Sigmoid colon (tissue), 7 donors: ENCODE measurements at regions of chr2 and their contacts with region 1.

Region 1: DNA sequence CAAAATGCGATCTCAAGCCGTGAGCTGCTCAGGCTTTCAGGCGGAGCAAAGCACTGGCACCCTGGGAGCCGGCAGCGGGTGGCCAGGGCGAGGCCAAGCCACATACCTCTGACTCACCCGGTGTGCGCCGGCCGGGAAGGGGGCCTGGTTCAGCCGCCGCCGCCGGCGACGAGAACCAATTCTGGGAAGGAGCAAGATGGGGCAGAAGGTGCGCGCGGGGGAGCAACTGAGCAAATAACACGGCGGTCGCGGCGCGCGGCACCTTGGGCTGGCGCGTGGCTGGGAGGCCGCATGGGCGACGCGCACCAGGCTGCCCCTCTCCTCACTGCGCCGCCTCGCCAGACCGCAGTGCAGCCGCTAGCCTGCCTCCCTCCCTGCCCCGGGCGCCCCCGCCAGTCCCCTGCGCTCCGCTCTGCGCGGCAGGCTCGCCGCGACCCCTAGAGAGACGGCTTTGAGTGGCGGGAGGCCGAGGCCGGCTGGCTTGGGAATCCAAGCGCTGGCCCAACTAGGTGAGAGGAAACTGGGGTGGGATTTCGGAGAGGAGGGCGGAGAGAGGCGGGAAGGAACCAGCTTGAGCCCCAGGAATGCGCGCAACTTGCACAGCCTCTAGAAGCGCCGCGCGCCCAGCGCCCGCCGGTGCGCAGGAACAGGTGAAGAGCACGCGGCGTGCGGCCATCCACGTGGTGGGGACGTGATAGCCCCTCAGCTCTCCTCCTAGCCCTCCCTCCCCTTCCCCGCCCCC is 3.2 kb downstream of the NRP2 start:
- DNase-seq: peak; percentile 79
- H3K4me3 ChIP-seq: peak overlapping the region; percentile 70 to 99 (median 90)
- H3K27ac ChIP-seq: peak overlapping the region; percentile 94 to 99 (median 96)
- H3K4me1 ChIP-seq: peaks cover 0 to 51% (median 47%) of the 10 kb centered on the region in 4 donors
- H3K27me3 ChIP-seq: no peaks in the 10 kb centered on the region
- CTCF ChIP-seq: no peak
- EP300 ChIP-seq: no peak
- POLR2A ChIP-seq: no peak

Region 2: GRCh38 chr2:205706769-205707381 is 21.4 kb after region 1 on chr2:
- intact Hi-C with region 1: loop called (anchors 2 kb)
- DNase-seq: peak; percentile 94
- H3K4me3 ChIP-seq: peak overlapping the region in 2 of 4 donors; percentile 0 to 7
- H3K27ac ChIP-seq: peak overlapping the region; percentile 94 to 99 (median 96)
- H3K4me1 ChIP-seq: peaks cover 0 to 100% (median 95%) of the 10 kb centered on the region in 4 donors
- H3K27me3 ChIP-seq: no peaks in the 10 kb centered on the region
- CTCF ChIP-seq: no peak
- EP300 ChIP-seq: peak in 1 of 4 donors; percentile 70
- POLR2A ChIP-seq: no peak

Region 3: DNA sequence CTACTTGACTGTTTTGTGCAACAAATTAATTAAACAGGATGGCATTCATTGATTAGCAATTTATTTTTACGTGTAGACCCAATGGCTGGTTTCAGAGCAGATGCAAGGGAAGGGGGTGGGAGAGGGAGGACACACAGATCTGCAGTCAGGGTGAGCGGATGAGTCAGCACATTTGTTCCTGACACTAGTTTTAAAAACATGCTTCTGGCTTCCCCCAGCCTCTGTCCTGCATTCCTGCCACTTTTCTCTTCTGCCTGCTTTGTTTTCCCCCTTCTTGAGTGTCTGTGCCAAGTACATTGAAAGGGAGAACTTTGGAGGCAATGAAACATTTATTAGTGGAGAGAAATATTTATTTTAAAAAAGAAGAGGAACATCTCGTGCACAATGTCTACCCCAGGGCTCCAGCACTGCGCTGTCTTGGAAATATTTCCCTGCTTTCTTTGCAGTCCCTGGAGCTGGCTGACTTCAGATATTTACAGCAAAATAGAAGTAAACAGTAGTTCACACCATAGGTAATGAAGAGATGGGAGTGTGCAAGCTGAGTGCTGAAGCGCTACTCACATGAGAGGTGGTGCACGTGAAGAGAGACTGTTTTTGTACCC is 49.1 kb after region 1 on chr2:
- intact Hi-C with region 1: loop called (anchors 5 kb)
- DNase-seq: peak; percentile 92
- H3K4me3 ChIP-seq: no peak overlapping the region
- H3K27ac ChIP-seq: peak overlapping the region; percentile 83 to 99 (median 94)
- H3K4me1 ChIP-seq: peaks cover 0 to 86% (median 76%) of the 10 kb centered on the region in 4 donors
- H3K27me3 ChIP-seq: no peaks in the 10 kb centered on the region
- CTCF ChIP-seq: no peak
- EP300 ChIP-seq: peak in 2 of 4 donors; percentile 81 to 83
- POLR2A ChIP-seq: no peak

Region 4: GRCh38 chr2:205758051-205758450 is 72.6 kb after region 1 on chr2:
- intact Hi-C with region 1: loop called (anchors 2 kb)
- DNase-seq: peak; percentile 72
- H3K4me3 ChIP-seq: no peak overlapping the region
- H3K27ac ChIP-seq: peak overlapping the region; percentile 86 to 99 (median 94)
- H3K4me1 ChIP-seq: peaks cover 0 to 100% (median 90%) of the 10 kb centered on the region in 4 donors
- H3K27me3 ChIP-seq: no peaks in the 10 kb centered on the region
- CTCF ChIP-seq: no peak
- EP300 ChIP-seq: peak in 2 of 4 donors; percentile 9 to 34
- POLR2A ChIP-seq: no peak

Region 5: DNA sequence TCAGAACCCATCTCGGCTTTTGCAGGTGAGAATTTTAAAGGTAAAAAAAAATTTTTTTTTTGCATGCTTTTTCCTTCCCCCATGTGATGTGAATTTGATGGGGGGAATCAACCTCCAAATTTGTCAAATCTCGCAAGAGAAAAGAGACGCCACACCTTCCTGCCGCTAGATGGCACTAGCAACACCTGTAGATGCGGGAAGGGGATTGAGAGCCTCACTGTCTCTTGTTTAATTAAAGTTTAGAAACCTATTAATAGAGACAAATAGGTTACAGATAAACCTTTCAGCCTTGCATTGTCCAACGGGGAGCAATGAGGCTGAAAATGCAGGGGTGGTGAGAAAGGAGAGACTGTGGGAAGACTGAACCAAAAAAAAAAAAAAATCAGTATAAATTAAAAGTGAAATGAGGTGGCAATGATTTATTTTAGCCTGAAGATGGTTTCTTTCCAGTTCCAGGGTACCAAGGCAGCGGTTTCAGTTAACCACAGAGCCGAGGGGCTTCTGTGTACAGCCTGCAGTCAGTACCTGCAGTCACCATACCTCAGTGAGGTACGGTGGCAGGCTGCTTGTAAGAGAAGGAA is 81.4 kb after region 1 on chr2:
- intact Hi-C with region 1: loop called (anchors 2 kb)
- DNase-seq: peak; percentile 89
- H3K4me3 ChIP-seq: no peak overlapping the region
- H3K27ac ChIP-seq: peak overlapping the region; percentile 86 to 99 (median 94)
- H3K4me1 ChIP-seq: peaks cover 0 to 98% (median 94%) of the 10 kb centered on the region in 4 donors
- H3K27me3 ChIP-seq: no peaks in the 10 kb centered on the region
- CTCF ChIP-seq: peak; percentile 82 to 92 (median 88)
- EP300 ChIP-seq: no peak
- POLR2A ChIP-seq: no peak